ENCODE measurements at regions of chr12 and their contacts with region 1.

Region 1: DNA sequence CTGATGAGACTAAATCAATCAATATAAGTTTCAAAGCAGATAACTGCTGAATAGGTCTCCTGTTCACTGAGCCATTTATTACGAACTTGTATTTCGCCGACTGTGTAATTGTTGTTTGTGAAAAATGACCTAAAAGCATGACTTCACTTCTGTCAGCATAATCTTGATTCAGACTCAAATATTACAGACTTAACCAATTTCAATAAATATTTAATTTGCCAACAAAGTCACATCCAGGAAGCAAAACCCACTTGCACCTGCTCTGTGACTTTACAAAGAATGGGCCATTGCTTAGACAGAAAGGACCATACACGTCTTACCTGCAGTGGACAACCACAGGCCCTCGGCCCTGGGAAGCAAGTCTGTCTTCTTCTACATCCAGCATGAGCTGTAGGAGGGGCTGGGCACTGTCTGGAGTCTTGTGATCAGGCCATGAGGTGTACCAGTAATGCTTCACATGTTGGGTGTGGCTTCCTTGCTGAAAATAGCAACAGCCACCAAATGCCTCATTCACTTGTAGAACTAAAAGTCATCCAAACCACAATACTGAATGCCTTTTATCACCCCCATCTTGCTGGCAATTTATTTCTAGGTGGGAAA is 23.5 kb upstream of the PTPRB start:
- DNase-seq: peak in 1 of 2 experiments; percentile 65
- H3K4me3 ChIP-seq: no peak overlapping the region
- H3K27ac ChIP-seq: no peak overlapping the region
- H3K4me1 ChIP-seq: peaks cover 18% of the 10 kb centered on the region; the same call in 1 of the 2 replicates
- H3K27me3 ChIP-seq: no peaks in the 10 kb centered on the region
- CTCF ChIP-seq: no peak

Region 2: DNA sequence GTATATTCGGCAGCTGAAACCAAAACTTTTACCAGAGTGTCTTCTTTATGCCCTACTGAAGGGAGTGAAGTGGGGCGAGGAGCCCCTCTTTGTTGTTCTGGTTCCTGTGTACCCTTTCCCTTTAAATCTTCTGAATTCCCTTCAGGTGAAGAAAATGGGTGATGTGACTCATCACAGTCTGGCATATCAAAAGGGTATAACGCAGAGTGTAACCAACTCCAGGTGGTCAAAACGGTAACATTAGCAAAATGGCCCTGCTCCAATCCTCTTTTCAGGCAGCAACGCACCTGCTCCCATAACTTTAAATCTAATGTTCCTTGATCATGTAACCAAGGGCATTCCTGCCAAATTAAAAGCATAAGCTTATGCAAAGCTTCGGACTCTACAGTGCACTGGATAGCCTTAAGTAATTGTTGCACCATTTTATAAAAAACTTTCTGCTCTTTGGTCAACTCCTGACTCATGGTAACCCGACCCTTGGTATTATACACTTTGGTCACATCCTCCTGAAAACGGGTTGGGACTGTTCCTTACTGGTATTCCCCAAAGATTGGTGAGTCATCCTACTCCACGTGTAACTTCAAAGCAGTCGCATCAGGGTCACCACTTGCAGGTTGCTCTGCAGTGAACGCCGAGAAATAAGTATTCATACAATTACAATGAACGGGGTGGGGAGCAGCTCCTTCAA is 211.5 kb before region 1 on chr12:
- CTCF ChIA-PET with region 1: no interaction called
- POLR2A ChIA-PET with region 1: no interaction called
- intact Hi-C with region 1: loop called (anchors 1 kb)
- DNase-seq: peak; percentile 58 to 96
- H3K4me3 ChIP-seq: peak overlapping the region; percentile 38
- H3K27ac ChIP-seq: peak overlapping the region; percentile 86
- H3K4me1 ChIP-seq: peaks cover 35% of the 10 kb centered on the region
- H3K27me3 ChIP-seq: no peaks in the 10 kb centered on the region
- CTCF ChIP-seq: no peak

Region 3: DNA sequence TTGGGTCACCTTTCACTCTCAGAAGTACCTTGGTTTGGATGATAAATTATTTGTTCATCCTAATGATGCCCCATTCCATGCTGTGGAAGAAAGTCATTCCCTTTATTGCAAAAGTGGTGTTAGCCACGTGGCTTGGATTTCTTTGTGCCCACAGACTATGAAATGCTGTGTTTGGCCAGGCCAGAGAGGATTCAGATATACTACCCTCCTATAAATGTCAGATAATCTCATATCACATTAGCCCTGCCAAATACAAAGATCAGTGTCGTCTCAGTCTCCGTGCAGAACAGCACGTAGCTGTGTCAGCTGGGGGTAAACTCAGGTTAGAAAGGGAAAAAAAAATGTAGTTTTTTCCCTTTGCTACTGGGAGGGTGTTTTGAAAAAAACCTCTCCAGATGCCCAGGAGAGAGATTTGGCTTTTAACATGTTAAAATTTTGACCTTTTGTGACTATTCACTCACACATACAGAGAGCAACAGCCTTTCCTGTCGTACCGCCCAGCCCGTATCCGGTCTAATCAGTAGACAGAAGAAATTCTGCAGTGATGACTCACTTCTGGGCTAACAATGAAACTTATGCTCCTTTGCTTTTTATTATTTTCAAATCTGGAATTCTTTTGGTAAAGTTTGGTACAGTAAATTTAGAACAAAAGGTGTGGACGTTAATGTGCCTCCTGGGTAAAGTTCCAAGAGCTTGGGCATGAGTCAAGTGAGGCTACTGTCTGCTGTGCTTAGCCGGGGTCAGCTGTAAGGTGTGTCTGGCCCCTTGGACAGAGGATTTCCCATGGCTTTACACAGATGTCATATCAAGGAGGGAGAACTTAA is 15.0 kb before region 1 on chr12:
- CTCF ChIA-PET with region 1: interaction called, 3 read pairs
- POLR2A ChIA-PET with region 1: no interaction called
- intact Hi-C with region 1: loop called (anchors 1 kb)
- DNase-seq: peak; percentile 72 to 85
- H3K4me3 ChIP-seq: no peak overlapping the region; the same call in 1 of the 2 replicates
- H3K27ac ChIP-seq: peak overlapping the region; percentile 68
- H3K4me1 ChIP-seq: peaks cover 40% of the 10 kb centered on the region
- H3K27me3 ChIP-seq: no peaks in the 10 kb centered on the region
- CTCF ChIP-seq: no peak

Measured in PC-9 (cell line).